CD8-positive, alpha-beta memory T cell (primary cell): ENCODE measurements at regions of chr9 and their contacts with region 1.

Region 1: DNA sequence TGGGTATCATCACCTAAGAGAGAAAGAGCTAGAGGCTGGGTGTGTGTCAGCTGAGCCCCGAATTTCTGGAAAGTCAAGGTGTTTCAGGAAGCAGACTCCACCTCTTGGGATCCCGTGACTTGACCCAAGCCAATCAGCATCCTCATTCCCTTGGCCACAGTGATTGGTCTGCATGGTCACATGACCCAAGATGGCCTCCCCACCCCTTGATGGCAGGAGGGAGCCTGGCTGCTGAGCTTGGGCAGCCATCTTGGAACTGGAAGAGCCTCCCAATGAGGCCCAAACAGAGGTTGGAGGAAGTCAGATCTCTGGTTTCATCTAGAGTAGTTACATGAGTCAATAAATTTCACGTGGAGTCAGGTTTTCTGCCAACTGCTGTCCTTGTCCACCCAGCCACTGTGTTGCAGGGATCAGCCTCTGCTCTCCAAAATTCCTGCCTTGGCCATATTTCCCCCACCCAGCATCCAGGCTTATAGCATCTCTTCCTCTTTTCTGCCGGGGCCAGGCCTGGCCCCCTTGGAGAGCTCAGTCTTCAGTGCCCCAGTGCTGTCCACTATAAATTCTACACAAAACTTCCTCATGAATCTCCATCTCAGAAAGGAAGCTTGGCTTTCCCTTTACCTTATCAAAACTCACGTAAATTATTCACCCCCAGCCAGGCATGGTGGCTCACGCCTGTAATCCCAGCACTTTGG is 17.2 kb upstream of the SUSD3 start:
- DNase-seq: no peak
- H3K4me3 ChIP-seq: no peak overlapping the region
- H3K4me3 Mint-ChIP-seq: peak overlapping the region in 1 of 7 donors; percentile 5
- H3K27ac ChIP-seq: no peak overlapping the region
- H3K27ac Mint-ChIP-seq: peak overlapping the region in 5 of 8 donors; percentile 60 to 87 (median 79)
- H3K4me1 ChIP-seq: peaks cover 40% of the 10 kb centered on the region
- H3K4me1 Mint-ChIP-seq: peaks cover 33 to 69% (median 38%) of the 10 kb centered on the region in 3 donors
- H3K27me3 ChIP-seq: no peaks in the 10 kb centered on the region
- H3K27me3 Mint-ChIP-seq: peaks cover 0 to 6% of the 10 kb centered on the region in 2 donors

Region 2: GRCh38 chr9:92931606-92932005 is 109.6 kb before region 1 on chr9:
- CTCF ChIA-PET with region 1: no interaction called
- POLR2A ChIA-PET with region 1: interaction called, 11 read pairs
- DNase-seq: no peak
- H3K4me3 ChIP-seq: no peak overlapping the region
- H3K4me3 Mint-ChIP-seq: no peak overlapping the region
- H3K27ac ChIP-seq: no peak overlapping the region
- H3K27ac Mint-ChIP-seq: no peak overlapping the region
- H3K4me1 ChIP-seq: no peaks in the 10 kb centered on the region
- H3K4me1 Mint-ChIP-seq: no peaks in the 10 kb centered on the region
- H3K27me3 ChIP-seq: no peaks in the 10 kb centered on the region
- H3K27me3 Mint-ChIP-seq: peaks cover 0 to 4% of the 10 kb centered on the region in 2 donors

Region 3: DNA sequence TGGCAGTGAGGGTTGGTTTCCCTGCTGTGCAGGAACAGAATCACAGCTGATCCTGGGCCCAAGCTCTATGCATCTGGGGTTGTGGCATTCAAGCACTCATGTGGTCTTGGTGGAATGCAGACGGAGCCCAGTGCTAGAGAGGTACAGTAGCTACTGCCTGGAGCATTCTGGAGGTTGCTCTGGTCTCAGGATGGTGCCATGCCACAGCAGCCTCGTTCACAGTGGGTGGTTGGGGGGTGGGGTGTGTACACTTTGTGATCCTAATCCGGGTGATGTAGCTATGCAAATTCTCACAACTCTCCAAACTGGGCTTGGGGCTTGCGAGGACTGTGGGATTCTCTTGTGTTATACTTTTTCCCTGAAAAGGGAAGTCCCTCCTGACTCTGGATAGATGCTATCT is 48.7 kb before region 1 on chr9:
- CTCF ChIA-PET with region 1: interaction called, 3 read pairs
- POLR2A ChIA-PET with region 1: interaction called, 10 read pairs
- DNase-seq: no peak
- H3K4me3 ChIP-seq: peak overlapping the region; percentile 27
- H3K4me3 Mint-ChIP-seq: peak overlapping the region in 6 of 7 donors; percentile 1 to 53 (median 28)
- H3K27ac ChIP-seq: no peak overlapping the region
- H3K27ac Mint-ChIP-seq: peak overlapping the region; percentile 17 to 90 (median 72)
- H3K4me1 ChIP-seq: peaks cover 52% of the 10 kb centered on the region
- H3K4me1 Mint-ChIP-seq: peaks cover 93 to 100% (median 99%) of the 10 kb centered on the region in 3 donors
- H3K27me3 ChIP-seq: no peaks in the 10 kb centered on the region
- H3K27me3 Mint-ChIP-seq: no peaks in the 10 kb centered on the region